Motor neuron (in vitro differentiated cells): ENCODE measurements at regions of chr1 and their contacts with region 1.

Region 1: DNA sequence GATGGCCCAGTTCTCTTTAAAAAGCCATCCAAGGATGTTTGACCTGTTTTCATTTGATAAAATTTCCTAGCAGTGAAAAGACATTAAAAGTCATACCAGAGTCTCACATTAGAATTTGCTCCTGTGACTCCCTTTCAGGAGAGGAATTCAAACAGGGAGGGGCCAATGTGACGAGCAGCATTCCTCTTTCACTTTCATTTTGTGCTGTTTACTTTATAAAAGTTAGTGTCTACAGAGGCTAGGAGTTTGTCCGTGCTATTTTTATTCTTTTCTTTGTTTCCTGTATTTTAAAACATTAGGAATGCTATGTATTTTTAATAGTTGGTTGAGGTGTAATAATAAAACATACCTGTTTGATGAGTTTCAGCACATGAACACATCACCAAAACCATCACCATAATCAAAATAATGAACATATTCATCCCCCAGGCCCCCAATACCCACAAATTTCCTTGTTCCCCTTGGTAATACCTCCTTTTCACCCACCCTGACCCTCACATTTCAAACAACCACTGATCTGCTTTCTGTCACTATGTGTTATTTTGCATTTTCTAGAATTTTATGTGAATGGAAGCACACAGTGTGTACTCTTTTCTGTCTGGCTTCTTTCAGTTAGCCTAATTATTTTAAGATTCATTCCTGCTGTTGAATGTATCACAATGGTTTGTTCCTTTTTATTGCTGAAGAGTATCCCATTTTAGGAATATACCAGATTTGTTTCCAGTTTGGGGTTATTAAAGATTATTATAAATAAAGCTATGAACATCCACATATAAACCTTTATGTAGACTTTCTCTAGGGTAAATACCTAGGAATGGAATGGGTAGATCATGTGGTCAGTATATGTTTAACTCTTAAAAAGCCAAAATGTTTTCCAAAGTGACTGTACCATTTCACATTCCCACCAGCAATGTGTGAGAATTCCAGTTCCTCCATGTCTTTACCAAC is 129.5 kb downstream of the TENT5C start:
- ATAC-seq: peak in 4 of 8 experiments; percentile 31 to 98 (median 84)
- H3K4me3 ChIP-seq: no peak overlapping the region
- H3K27ac ChIP-seq: no peak overlapping the region
- H3K4me1 ChIP-seq: no peaks in the 10 kb centered on the region

Region 2: DNA sequence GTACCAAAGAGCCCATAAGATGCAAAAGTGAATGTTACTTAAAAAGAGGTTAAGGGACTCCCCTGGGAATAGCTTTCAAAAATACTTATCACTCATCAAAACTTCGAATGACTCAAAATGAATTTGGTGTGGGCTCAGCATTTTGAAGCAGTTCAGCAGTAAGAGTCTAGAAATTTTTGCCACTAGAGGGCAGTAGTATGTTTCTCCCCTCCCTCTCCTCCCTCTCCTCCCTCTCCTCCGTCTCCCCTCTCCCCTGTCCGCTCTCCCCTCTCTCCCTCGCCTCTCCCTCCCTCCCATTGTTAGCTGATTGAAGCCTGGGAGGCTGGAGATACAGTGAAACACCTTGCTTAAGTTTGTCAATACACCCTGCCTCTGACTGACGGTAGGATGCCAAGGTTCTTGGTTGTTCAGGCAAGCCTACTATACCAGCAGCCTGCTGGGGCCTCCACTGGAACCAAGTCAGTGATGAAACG is 200.3 kb before region 1 on chr1:
- in situ Hi-C with region 1: loop called in 1 of 9 experiments (anchors 25 kb)
- ATAC-seq: peak; percentile 38 to 98 (median 72)
- H3K4me3 ChIP-seq: no peak overlapping the region
- H3K27ac ChIP-seq: no peak overlapping the region
- H3K4me1 ChIP-seq: no peaks in the 10 kb centered on the region

Region 3: DNA sequence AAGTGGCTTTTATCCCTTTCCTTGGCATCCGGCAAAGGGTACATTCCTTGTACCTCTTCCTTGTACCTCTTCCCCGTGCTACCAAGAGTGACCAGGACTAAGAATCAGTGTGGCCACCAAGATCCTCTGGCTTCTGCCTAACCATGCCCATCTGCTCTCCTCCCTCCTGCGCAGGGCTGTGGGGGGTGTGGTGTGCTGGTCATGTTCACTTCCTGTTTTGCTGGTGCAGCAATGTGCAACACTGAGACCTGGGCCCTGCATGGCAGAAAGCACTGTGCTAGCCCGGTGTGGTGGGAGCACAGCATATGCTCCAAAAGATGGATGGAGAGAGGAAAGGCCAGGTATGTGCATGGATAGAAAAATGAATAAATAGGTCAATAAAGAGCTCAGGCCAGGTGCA is 162.8 kb before region 1 on chr1:
- in situ Hi-C with region 1: loop called in 1 of 9 experiments (anchors 25 kb)
- ATAC-seq: no peak
- H3K4me3 ChIP-seq: no peak overlapping the region
- H3K27ac ChIP-seq: no peak overlapping the region
- H3K4me1 ChIP-seq: no peaks in the 10 kb centered on the region

Region 4: GRCh38 chr1:118012515-118013124 is 277.3 kb after region 1 on chr1:
- in situ Hi-C with region 1: no loop called
- ATAC-seq: peak in 2 of 8 experiments; percentile 22 to 73
- H3K4me3 ChIP-seq: no peak overlapping the region
- H3K27ac ChIP-seq: no peak overlapping the region
- H3K4me1 ChIP-seq: no peaks in the 10 kb centered on the region